GM12878 (cell line): ENCODE measurements at regions of chr3 and their contacts with region 1.

Region 1: GRCh38 chr3:58691997-58692396 is 25.4 kb upstream of the FAM3D start:
- DNase-seq: no peak
- ATAC-seq: no peak
- H3K4me3 ChIP-seq: no peak overlapping the region
- H3K27ac ChIP-seq: no peak overlapping the region
- H3K4me1 ChIP-seq: no peaks in the 10 kb centered on the region
- H3K27me3 ChIP-seq: no peaks in the 10 kb centered on the region
- CTCF ChIP-seq: no peak
- EP300 ChIP-seq: no peak
- POLR2A ChIP-seq: no peak
- RAD21 ChIP-seq: no peak

Region 2: GRCh38 chr3:58659051-58659675 is 32.8 kb before region 1 on chr3:
- CTCF ChIA-PET with region 1: no interaction called
- POLR2A ChIA-PET with region 1: no interaction called
- RAD21 ChIA-PET with region 1: no interaction called
- SMC1A ChIA-PET with region 1: no interaction called
- in situ Hi-C with region 1: no loop called
- intact Hi-C with region 1: no loop called
- DNase-seq: no peak
- ATAC-seq: no peak
- H3K4me3 ChIP-seq: no peak overlapping the region
- H3K27ac ChIP-seq: no peak overlapping the region
- H3K4me1 ChIP-seq: no peaks in the 10 kb centered on the region
- H3K27me3 ChIP-seq: peaks cover 2 to 6% of the 10 kb centered on the region in 2 experiments; a peak in 2 of 4 replicates
- CTCF ChIP-seq: 0 out of 6 replicates have a peak, but pooled peaks of 1 of the 3 experiments have one; percentile 3
- EP300 ChIP-seq: no peak
- POLR2A ChIP-seq: no peak
- RAD21 ChIP-seq: no peak

Region 3: DNA sequence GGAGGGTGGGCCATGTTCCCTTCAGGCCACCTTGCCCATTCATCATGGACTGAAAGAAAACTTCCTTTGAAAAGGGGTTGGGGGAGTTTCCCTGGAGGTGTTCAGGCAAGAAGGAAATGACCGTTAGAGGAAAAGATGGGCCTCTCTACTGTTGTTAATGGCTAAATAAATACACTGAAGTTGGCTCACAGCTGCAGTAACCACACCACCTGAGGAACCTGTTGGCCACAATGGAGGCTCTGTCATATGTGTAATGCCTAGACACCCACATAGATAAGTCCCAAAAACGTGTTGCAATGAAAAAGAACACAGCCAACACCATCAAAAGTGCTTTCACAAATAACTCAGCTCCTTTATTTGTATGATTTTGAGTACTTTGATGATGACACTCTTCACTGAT is 12.7 kb after region 1 on chr3:
- CTCF ChIA-PET with region 1: interaction called, 3 read pairs
- POLR2A ChIA-PET with region 1: interaction called, 3 read pairs
- RAD21 ChIA-PET with region 1: interaction called, 4 read pairs
- SMC1A ChIA-PET with region 1: interaction called, 10 read pairs
- in situ Hi-C with region 1: no loop called
- intact Hi-C with region 1: no loop called
- DNase-seq: no peak
- ATAC-seq: no peak
- H3K4me3 ChIP-seq: no peak overlapping the region
- H3K27ac ChIP-seq: no peak overlapping the region
- H3K4me1 ChIP-seq: no peaks in the 10 kb centered on the region
- H3K27me3 ChIP-seq: no peaks in the 10 kb centered on the region
- CTCF ChIP-seq: no peak
- EP300 ChIP-seq: no peak
- POLR2A ChIP-seq: no peak
- RAD21 ChIP-seq: no peak